A549 (cell line): ENCODE measurements at regions of chr12 and their contacts with region 1.

Region 1: DNA sequence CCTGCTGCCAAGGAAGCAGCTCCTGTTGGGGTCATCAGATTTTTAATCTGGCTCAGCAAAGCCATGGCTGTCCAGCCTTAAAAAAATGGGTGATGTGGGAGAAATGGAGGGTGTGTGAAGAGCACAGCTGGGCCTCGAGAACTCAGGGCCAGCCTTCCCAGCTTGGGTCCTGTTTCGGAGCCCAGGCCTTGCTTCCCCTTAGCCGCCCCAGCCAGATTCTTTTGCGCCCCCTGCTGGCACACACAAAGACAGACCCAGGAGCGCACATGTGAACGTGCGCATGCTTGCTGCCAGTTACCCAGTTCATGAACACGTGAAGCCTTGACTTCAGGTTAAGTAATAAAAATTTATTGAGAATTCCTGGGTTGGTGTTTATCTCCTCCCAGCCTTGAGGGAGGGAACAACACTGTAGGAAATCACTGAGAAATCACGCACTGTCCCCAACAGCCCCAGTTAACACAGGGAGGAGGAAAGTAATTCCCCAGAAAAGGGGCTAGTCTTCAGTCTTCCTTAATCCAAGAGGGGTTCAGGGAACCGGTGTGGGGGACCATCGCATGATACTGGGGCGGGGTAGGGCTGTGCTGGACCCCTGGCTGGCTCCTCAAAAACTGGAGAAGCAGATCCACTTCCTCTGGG is 5.3 kb downstream of the PHB2 start:
- DNase-seq: peak; percentile 92 to 93
- ATAC-seq: peak; percentile 64 to 77
- H3K4me3 ChIP-seq: no peak overlapping the region
- H3K27ac ChIP-seq: peak overlapping the region; percentile 50 to 99; a peak in 5 of 6 replicates
- H3K4me1 ChIP-seq: peaks cover 51% of the 10 kb centered on the region
- CTCF ChIP-seq: peak; percentile 89
- EP300 ChIP-seq: no peak
- POLR2A ChIP-seq: no peak
- RAD21 ChIP-seq: peak; percentile 59 to 67; a peak in 4 of 5 replicates

Region 2: DNA sequence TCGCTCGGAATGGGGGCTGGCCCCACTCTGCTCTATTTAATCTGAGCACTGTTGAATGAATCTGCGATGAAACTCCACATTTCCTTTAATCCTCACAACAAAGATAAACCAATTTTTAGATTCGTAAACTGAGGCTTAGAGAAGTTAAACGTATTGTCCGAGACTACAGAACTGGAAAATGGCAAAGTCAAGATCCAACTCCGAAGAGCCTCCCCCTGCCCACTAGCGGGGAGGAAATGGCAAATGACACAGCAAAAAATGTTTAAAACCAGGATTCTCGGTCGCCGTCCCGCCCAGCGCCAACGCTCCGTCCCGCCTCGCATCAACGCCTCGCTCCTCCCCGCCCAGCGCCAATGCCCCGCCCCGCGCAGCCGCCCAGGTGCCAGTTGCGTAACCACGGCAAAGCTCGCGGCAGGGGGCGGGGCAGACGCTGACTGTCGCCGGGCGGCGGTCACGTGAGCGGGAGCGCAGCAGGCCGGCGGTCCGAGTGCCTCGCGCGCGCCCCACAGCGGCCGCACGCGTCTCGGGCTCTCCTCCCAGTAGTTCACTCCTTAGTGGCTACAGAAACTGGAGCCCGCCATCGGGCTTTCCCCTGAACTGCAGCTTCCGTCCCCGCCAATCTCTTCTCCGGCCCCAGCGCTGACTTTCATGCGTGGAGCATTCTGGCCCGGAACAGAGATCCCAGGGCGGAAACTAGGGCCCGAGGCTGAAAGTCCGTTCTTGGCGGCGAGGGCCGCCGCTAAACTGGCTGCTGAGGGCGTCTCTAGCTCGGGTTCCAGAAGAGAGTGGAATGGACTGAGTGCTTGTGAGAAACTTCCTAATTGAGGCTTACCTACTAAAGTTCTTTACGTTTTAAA is 74.1 kb before region 1 on chr12:
- CTCF ChIA-PET with region 1: interaction called, 10 read pairs
- POLR2A ChIA-PET with region 1: no interaction called
- DNase-seq: peak; percentile 93 to 99
- ATAC-seq: peak; percentile 95 to 96
- H3K4me3 ChIP-seq: peak overlapping the region; percentile 40
- H3K27ac ChIP-seq: peak overlapping the region; percentile 94 to 98
- H3K4me1 ChIP-seq: peaks cover 38% of the 10 kb centered on the region
- CTCF ChIP-seq: peak; percentile 95
- EP300 ChIP-seq: peak in 1 of 2 experiments; percentile 54; a peak in 1 of 5 replicates
- POLR2A ChIP-seq: peak; percentile 70
- RAD21 ChIP-seq: peak; percentile 69 to 94

Region 3: GRCh38 chr12:6937481-6938297 is 27.5 kb before region 1 on chr12:
- CTCF ChIA-PET with region 1: interaction called, 354 read pairs
- POLR2A ChIA-PET with region 1: interaction called, 174 read pairs
- DNase-seq: peak; percentile 80 to 98
- ATAC-seq: peak; percentile 86 to 93
- H3K4me3 ChIP-seq: peak overlapping the region; percentile 49
- H3K27ac ChIP-seq: peak overlapping the region; percentile 81 to 92
- H3K4me1 ChIP-seq: peaks cover 45% of the 10 kb centered on the region
- CTCF ChIP-seq: peak; percentile 84
- EP300 ChIP-seq: no peak
- POLR2A ChIP-seq: peak; percentile 92
- RAD21 ChIP-seq: peak; percentile 37 to 40; a peak in 4 of 5 replicates

Region 4: GRCh38 chr12:6953442-6954315 is 11.5 kb before region 1 on chr12:
- CTCF ChIA-PET with region 1: interaction called, 354 read pairs
- POLR2A ChIA-PET with region 1: interaction called, 3 read pairs
- DNase-seq: no peak
- ATAC-seq: no peak
- H3K4me3 ChIP-seq: no peak overlapping the region
- H3K27ac ChIP-seq: no peak overlapping the region
- H3K4me1 ChIP-seq: 0 out of 3 replicates have a peak, but pooled peaks cover 3% of the 10 kb centered on the region
- CTCF ChIP-seq: no peak
- EP300 ChIP-seq: no peak
- POLR2A ChIP-seq: no peak
- RAD21 ChIP-seq: no peak